ENCODE measurements at regions of chr9 and their contacts with region 1.

Region 1: DNA sequence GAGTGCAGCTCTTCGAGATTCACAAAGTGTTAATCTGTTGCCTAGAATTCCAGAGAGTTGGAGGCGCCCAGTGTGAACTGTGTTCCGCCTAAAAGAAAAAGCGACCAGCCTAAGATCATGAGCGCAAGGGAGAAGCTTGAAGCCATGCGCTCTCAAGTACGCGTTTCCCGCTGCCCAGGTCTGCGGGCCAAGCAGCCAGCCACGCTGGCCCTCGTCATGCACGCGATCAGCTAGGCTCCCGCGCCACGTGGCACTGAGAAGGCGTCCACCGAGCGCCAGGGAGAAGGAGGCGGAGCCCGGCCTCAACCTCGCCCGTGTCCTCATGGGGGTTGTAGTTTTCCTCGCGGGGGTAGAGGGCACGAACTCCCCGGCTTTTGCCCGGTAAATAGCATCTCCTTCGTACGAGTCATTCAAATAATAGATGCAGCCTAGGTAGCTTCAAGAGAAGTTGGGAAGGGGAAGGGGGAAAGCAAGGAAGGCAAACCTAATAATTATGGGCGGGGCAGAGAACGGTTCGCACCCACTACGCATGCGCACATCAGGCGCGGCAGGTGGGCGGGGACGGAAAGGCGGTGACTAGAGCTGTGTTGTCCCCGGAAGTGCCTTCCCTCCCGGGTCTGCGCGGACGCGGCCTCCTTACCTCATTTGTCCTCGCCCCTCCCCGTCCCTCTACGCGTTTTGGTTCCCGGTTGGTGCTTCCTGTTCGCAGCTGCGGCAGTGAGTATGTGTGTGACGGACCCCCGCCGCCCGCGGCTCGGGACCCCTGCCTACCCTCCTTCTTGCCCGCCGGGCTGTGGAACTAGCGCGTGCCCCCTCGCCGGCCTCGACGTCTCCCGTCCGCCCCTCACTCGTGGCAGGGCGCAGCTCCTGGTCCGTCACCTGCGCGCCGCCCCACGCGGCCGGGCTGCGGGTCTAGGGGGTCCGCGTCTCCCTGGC is at the start of gene ZCCHC7:
- DNase-seq: peak; percentile 77 to 88
- H3K4me3 ChIP-seq: peak within 1 kb of the TSS; percentile 92
- H3K27ac ChIP-seq: peak within 1 kb of the TSS; percentile 51
- H3K4me1 ChIP-seq: 0 out of 2 replicates have a peak, but pooled peaks cover 12% of the 10 kb centered on the region
- H3K27me3 ChIP-seq: no peaks in the 10 kb centered on the region
- CTCF ChIP-seq: no peak
- total RNA-seq, gene ZCCHC7: 14.1 and 15.9 TPM in 2 replicates

Region 2: DNA sequence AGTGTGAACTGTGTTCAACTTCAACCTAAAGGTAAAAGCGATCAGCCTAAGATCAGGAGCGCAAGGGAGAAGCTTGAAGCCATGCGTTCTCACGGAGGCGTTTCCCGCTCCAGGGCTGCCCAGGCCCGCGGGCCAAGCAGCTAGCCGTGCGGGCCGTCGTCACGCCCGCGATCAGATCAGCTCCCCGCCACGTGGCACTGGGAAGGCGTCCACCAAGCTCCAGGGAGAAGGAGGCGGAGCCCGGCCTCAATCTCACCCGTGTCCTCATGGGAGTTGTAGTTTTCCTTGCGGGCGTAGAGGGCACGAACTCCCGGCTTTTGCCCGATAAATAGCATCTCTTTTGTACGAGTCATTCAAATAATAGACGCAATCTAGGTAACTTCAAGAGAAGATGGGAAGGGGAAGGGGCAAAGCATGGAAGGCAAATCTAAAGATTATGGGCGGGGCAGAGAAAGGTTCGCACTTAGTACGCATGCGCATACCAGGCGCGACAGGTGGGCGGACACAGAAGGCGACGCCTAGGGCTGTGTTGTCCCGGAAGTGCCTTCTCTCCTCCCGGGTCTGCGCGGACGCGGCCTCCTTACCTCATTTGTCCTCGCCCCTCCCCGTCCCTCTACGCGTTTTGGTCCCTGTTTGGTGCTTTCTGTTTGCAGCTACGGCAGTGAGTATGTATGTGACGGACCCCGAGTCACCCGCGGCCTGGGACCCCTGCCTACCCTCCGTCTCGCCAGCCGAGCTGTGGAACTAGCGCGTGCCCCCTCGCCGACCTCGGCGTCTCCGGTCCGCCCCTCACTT is 40.6 kb before region 1 on chr9:
- CTCF ChIA-PET with region 1: no interaction called
- POLR2A ChIA-PET with region 1: no interaction called
- intact Hi-C with region 1: loop called (anchors 5 kb)
- DNase-seq: peak; percentile 74 to 81
- H3K4me3 ChIP-seq: peak overlapping the region; percentile 91
- H3K27ac ChIP-seq: peak overlapping the region; percentile 25
- H3K4me1 ChIP-seq: peaks cover 7% of the 10 kb centered on the region
- H3K27me3 ChIP-seq: no peaks in the 10 kb centered on the region
- CTCF ChIP-seq: no peak

Measured in PC-9 (cell line).